Mucosa of descending colon (tissue), 3 donors: ENCODE measurements at regions of chr5 and their contacts with region 1.

Region 1: GRCh38 chr5:53481887-53482716 is 1.7 kb downstream of the FST start:
- DNase-seq: peak; percentile 67 to 79 (median 78)
- ATAC-seq: peak; percentile 79
- H3K4me3 ChIP-seq: no peak overlapping the region
- H3K4me1 ChIP-seq: peaks cover 25% of the 10 kb centered on the region
- CTCF ChIP-seq: peak; percentile 12

Region 2: GRCh38 chr5:53378590-53379247 is 103.4 kb before region 1 on chr5:
- intact Hi-C with region 1: no loop called
- DNase-seq: no peak
- ATAC-seq: no peak
- H3K4me3 ChIP-seq: no peak overlapping the region
- H3K4me1 ChIP-seq: no peaks in the 10 kb centered on the region
- CTCF ChIP-seq: no peak

Region 3: GRCh38 chr5:53560506-53561191 is 78.5 kb after region 1 on chr5 and contains the start of gene NDUFS4:
- intact Hi-C with region 1: loop called in 1 of 2 experiments (anchors 10 kb)
- DNase-seq: peak; percentile 80 to 95 (median 85)
- ATAC-seq: peak; percentile 99
- H3K4me3 ChIP-seq: peak within 1 kb of the TSS; percentile 70
- H3K4me1 ChIP-seq: peaks cover 15% of the 10 kb centered on the region
- CTCF ChIP-seq: no peak
- total RNA-seq, gene NDUFS4: 83.6 to 96.6 (median 84.9) TPM

Region 4: DNA sequence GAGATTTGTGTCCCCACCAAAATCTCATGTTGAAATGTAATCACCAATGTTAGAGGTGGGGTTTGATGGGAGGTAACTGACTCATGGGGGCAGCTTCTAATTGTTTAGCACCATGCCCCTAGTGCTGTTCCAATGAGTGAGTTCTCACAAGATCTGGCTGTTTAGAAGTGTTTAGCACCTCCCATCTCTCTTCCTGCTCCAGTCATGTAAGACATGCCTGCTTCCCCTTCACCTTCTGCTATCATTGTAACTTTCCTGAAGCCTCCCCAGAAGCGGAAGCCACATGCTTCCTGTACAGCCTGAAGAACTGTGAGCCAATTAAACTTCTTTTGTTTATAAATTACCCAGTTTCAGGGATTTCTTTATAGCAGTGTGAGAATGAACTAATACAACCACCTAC is 248.8 kb after region 1 on chr5:
- intact Hi-C with region 1: no loop called
- DNase-seq: no peak
- ATAC-seq: no peak
- H3K4me3 ChIP-seq: no peak overlapping the region
- H3K4me1 ChIP-seq: no peaks in the 10 kb centered on the region
- CTCF ChIP-seq: no peak

Region 5: GRCh38 chr5:54217826-54218503 is 735.9 kb after region 1 on chr5:
- intact Hi-C with region 1: loop called (anchors 10 kb)
- DNase-seq: peak in 1 of 3 donors; percentile 70
- ATAC-seq: peak; percentile 77
- H3K4me3 ChIP-seq: no peak overlapping the region
- H3K4me1 ChIP-seq: no peaks in the 10 kb centered on the region
- CTCF ChIP-seq: peak; percentile 65